ENCODE measurements at regions of chr4 and their contacts with region 1.

Region 1: DNA sequence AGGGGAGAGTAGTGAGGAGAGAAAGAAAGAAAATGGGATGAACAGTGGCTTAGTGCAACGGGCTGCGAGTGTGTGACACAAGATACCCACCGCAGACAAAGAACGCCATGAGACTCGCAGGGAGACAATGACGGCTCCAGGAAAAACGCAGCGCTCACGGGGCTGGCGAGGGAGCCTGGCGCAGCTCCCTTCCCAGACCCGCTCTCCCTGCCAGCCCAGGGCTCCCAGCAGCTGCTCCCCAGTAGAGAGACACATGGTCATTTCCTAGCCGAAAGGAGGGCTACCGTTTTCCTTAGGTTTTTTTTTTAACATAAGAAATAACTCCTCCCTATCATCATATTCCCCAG is 149.5 kb downstream of the MAML3 start:
- DNase-seq: no peak
- ATAC-seq: no peak
- H3K4me3 Mint-ChIP-seq: no peak overlapping the region
- H3K27ac Mint-ChIP-seq: no peak overlapping the region
- H3K4me1 Mint-ChIP-seq: no peaks in the 10 kb centered on the region
- H3K27me3 Mint-ChIP-seq: peaks cover 5% of the 10 kb centered on the region
- CTCF ChIP-seq: no peak

Region 2: DNA sequence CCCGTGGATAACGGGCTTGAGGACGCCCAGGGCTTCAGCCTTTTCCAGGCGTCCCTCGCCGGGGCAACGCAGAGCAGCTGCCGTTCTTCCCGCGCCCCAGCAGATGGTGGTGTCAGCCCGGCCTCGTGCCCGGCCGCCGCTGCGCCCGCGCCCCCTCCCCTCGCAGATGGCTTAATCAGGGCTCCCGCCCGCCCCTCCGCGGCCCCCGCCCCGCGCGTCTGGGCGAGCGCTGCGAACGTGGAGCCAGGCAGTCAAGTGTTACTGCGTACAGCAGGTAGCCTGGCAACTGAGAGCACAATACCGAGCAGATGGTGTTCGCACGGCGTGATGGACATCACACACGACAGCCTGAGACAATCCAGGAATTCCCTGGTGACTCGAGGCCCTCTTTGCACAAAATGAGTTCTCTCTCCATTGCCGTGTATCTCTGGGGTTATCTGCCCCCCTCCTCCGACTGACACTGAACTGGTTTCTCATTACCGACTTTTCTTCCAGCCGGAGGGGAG is 269.6 kb before region 1 on chr4:
- CTCF ChIA-PET with region 1: no interaction called
- POLR2A ChIA-PET with region 1: no interaction called
- intact Hi-C with region 1: loop called (anchors 10 kb)
- DNase-seq: peak; percentile 76
- ATAC-seq: peak; percentile 82
- H3K4me3 Mint-ChIP-seq: peak overlapping the region; percentile 60
- H3K27ac Mint-ChIP-seq: no peak overlapping the region
- H3K4me1 Mint-ChIP-seq: peaks cover 16% of the 10 kb centered on the region
- H3K27me3 Mint-ChIP-seq: peaks cover 38% of the 10 kb centered on the region
- CTCF ChIP-seq: peak; percentile 78